Dendritic cell treated with granulocyte-macrophage colony-stimulating factor and Interleukin-4, amounts not matched to agents 40 ng/mL and 50 ng/mL, for 4 days (primary cell): ENCODE measurements at regions of chr16 and their contacts with region 1.

Region 1: DNA sequence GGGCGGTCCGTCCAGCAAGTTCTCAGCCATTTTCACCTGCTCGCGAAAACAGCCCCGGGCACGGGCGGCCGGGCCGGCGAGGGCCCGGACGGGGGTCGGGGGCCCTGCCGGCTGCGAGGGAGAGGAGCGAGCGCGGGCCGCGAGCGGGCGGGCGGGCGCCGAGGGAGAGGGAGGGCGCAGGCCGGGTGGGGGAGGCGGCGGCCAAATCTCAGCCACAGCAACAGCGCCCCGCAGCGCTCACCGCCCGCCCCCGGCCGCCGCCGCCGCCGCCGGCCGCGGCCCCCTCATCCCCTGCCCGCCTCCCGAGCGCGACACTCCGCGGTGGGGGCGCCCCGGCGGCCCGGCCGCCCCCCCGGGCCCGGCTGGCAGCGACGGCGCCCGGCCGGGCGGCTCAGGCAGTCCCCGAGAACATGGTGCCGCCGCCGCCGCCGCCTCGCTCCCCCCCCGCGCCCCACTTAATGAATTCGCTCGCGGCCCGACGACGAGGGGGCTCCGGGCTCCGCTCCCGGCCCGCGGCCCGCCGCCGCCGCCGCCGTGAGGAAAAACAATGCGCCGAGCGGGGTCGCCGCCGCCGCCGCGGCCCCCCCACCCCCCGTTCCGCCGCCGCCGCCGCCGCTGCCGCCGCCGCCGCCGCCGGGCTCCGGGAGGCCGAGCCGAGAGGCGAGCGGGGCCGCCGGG is 487 bp downstream of the CREBBP start:
- H3K4me3 Mint-ChIP-seq: peak overlapping the region; percentile 83
- H3K27ac Mint-ChIP-seq: peak overlapping the region; percentile 70
- H3K4me1 Mint-ChIP-seq: peaks cover 45% of the 10 kb centered on the region
- H3K27me3 Mint-ChIP-seq: peaks cover 17% of the 10 kb centered on the region

Region 2: GRCh38 chr16:3690470-3690928 is 189.5 kb before region 1 on chr16:
- intact Hi-C with region 1: loop called (anchors 5 kb)
- H3K4me3 Mint-ChIP-seq: peak overlapping the region; percentile 53
- H3K27ac Mint-ChIP-seq: peak overlapping the region; percentile 79
- H3K4me1 Mint-ChIP-seq: peaks cover 24% of the 10 kb centered on the region
- H3K27me3 Mint-ChIP-seq: no peaks in the 10 kb centered on the region

Region 3: GRCh38 chr16:3793161-3793576 is 86.9 kb before region 1 on chr16:
- intact Hi-C with region 1: loop called (anchors 5 kb)
- H3K4me3 Mint-ChIP-seq: no peak overlapping the region
- H3K27ac Mint-ChIP-seq: no peak overlapping the region
- H3K4me1 Mint-ChIP-seq: peaks cover 24% of the 10 kb centered on the region
- H3K27me3 Mint-ChIP-seq: no peaks in the 10 kb centered on the region

Region 4: GRCh38 chr16:3807425-3808123 is 72.5 kb before region 1 on chr16:
- intact Hi-C with region 1: no loop called
- H3K4me3 Mint-ChIP-seq: no peak overlapping the region
- H3K27ac Mint-ChIP-seq: peak overlapping the region; percentile 19
- H3K4me1 Mint-ChIP-seq: peaks cover 67% of the 10 kb centered on the region
- H3K27me3 Mint-ChIP-seq: no peaks in the 10 kb centered on the region

Region 5: DNA sequence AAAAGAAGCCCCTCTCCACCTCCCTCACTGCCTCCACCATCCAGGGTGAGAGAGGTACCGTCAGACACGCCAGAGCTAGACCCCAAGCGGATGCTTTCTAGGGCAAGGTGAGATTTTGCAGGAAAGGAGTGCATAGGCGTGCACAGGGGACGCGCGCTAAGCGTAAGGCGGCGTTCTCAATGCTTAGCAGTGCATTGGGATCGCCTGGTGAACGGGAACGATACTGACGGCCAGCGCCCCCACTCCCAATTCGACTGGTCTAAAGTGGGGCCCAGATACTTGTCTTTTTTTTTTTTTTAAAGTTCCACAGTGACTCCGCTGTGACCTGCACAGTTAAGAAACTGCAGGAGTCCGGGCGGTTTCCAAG is 58.4 kb after region 1 on chr16:
- intact Hi-C with region 1: no loop called
- H3K4me3 Mint-ChIP-seq: peak overlapping the region; percentile 55
- H3K27ac Mint-ChIP-seq: no peak overlapping the region
- H3K4me1 Mint-ChIP-seq: peaks cover 11% of the 10 kb centered on the region
- H3K27me3 Mint-ChIP-seq: peaks cover 26% of the 10 kb centered on the region